ENCODE measurements at regions of chr12 and their contacts with region 1.

Region 1: DNA sequence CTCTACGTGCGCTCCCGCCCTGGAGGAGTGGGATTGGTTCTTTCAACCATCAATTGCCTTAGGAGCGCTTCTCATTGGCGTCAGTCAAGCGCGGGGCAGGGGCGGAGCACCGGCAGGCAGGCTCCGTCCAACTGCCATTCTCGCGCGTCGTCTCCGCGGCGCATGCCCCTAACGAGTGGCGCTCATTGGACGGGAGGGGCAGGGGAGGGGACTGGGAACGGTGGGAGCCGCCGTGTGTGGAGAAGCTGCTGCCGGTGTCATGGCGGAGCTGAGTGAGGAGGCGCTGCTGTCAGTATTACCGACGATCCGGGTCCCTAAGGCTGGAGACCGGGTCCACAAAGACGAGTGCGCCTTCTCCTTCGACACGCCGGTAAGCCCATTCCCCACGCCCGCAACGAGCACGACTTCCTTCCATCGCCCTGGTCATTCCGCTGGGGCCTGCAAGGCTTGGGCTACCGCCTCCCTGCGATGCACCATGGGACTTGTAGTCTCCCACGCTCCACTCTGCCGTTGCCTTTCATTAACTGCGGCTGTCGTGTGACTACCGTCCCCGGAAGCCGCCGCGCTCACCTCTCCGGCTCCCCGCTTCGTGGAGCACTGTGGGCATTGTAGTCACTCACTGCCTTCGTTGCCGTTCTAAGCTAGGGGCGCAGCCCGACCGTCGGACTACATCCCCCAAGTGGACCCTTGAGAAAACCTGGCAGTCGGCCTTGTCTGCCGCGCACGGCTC is at the start of gene USP5:
- DNase-seq: peak; percentile 99
- H3K4me3 Mint-ChIP-seq: peak within 1 kb of the TSS; percentile 85
- H3K27ac Mint-ChIP-seq: peak within 1 kb of the TSS; percentile 100
- H3K4me1 Mint-ChIP-seq: peaks cover 50% of the 10 kb centered on the region
- H3K27me3 Mint-ChIP-seq: no peaks in the 10 kb centered on the region
- total RNA-seq, gene USP5: 91.4 to 109 TPM

Region 2: GRCh38 chr12:6647083-6647604 is 204.9 kb before region 1 on chr12 and contains the start of gene ACRBP:
- CTCF ChIA-PET with region 1: no interaction called
- POLR2A ChIA-PET with region 1: no interaction called
- DNase-seq: peak; percentile 43
- H3K4me3 Mint-ChIP-seq: peak within 1 kb of the TSS; percentile 47
- H3K27ac Mint-ChIP-seq: no peak within 1 kb of the TSS
- H3K4me1 Mint-ChIP-seq: peaks cover 12% of the 10 kb centered on the region
- H3K27me3 Mint-ChIP-seq: peaks cover 9% of the 10 kb centered on the region
- total RNA-seq, gene ACRBP: 1.8 TPM

Region 3: GRCh38 chr12:6688999-6689882 is 162.8 kb before region 1 on chr12 and contains the start of gene ZNF384:
- CTCF ChIA-PET with region 1: interaction called, 4 read pairs
- POLR2A ChIA-PET with region 1: interaction called, 27 read pairs
- DNase-seq: peak; percentile 97
- H3K4me3 Mint-ChIP-seq: peak within 1 kb of the TSS; percentile 87
- H3K27ac Mint-ChIP-seq: peak within 1 kb of the TSS; percentile 91
- H3K4me1 Mint-ChIP-seq: peaks cover 55% of the 10 kb centered on the region
- H3K27me3 Mint-ChIP-seq: no peaks in the 10 kb centered on the region
- total RNA-seq, gene ZNF384: 69.5 to 78.1 TPM

Region 4: DNA sequence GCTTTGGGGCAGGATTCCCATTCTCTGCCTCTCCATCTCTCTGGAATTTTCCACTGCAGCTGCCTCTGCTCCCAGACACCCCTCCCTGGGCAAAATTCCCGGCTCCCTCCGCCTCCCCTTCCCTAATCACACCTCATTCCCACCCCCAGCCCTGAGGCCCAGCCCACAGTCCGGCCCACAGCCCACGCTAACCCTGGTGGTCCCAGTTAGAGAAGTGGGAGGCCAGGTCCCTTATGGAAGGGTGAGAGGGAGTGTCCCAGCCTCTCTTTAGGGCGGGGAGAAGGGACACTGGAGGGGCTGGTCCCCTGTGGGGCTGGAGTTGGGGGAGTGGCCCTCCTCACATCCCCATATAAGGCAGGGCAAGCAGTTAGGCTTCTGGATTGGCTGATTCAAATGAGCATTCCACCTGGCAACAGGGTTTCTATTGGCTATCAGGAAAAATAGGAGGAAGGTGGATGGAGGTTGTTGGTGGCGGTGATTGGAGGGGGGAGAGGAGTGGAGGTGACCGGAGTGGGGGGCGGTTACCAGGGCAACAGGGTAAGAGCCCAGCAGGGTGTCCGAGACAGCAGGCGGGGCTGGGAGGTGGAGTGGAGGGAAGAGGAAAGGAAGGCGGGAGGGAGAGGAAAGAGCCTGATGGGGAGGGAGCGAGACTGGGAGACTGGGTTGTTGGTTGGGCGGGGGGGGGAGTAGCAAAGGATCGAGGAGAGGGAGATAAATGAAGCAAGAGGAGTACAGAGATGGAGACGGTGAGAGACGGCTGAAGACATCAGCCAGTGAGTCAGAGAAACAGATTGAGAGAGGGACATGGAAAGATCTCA is 87.9 kb before region 1 on chr12:
- CTCF ChIA-PET with region 1: interaction called, 16 read pairs
- POLR2A ChIA-PET with region 1: interaction called, 5 read pairs
- DNase-seq: peak; percentile 71
- H3K4me3 Mint-ChIP-seq: peak overlapping the region; percentile 38
- H3K27ac Mint-ChIP-seq: no peak overlapping the region
- H3K4me1 Mint-ChIP-seq: peaks cover 42% of the 10 kb centered on the region
- H3K27me3 Mint-ChIP-seq: peaks cover 46% of the 10 kb centered on the region

Region 5: GRCh38 chr12:6833189-6833890 is 18.7 kb before region 1 on chr12:
- CTCF ChIA-PET with region 1: interaction called, 35 read pairs
- POLR2A ChIA-PET with region 1: interaction called, 53 read pairs
- DNase-seq: no peak
- H3K4me3 Mint-ChIP-seq: no peak overlapping the region
- H3K27ac Mint-ChIP-seq: no peak overlapping the region
- H3K4me1 Mint-ChIP-seq: peaks cover 17% of the 10 kb centered on the region
- H3K27me3 Mint-ChIP-seq: peaks cover 38% of the 10 kb centered on the region

Region 6: DNA sequence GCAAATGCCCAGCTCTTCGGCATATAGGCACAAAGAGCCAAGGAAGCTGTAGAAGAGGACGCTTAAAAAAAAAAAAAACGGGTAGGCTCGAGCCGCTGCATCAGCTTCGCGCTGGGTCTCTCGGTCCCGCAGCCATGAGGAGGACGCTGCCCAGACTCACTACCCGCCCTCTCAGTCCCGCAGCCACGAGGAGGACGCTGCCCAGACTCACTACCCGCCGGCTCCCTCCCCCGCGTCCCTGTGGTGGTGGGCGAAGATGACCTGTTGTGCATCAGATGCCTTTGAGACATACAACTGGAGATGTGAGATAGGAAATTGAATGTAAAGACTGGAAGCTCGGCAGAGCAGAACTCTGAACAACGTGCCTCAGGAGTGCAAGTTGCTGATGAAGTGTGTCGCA is 32.5 kb after region 1 on chr12:
- CTCF ChIA-PET with region 1: no interaction called
- POLR2A ChIA-PET with region 1: interaction called, 14 read pairs
- DNase-seq: no peak
- H3K4me3 Mint-ChIP-seq: no peak overlapping the region
- H3K27ac Mint-ChIP-seq: no peak overlapping the region
- H3K4me1 Mint-ChIP-seq: peaks cover 9% of the 10 kb centered on the region
- H3K27me3 Mint-ChIP-seq: no peaks in the 10 kb centered on the region

Region 7: GRCh38 chr12:6944381-6945186 is 92.5 kb after region 1 on chr12:
- CTCF ChIA-PET with region 1: interaction called, 5 read pairs
- POLR2A ChIA-PET with region 1: interaction called, 37 read pairs
- DNase-seq: peak; percentile 91
- H3K4me3 Mint-ChIP-seq: peak overlapping the region; percentile 86
- H3K27ac Mint-ChIP-seq: peak overlapping the region; percentile 93
- H3K4me1 Mint-ChIP-seq: peaks cover 59% of the 10 kb centered on the region
- H3K27me3 Mint-ChIP-seq: no peaks in the 10 kb centered on the region